ENCODE measurements at regions of chr6 and their contacts with region 1.

Region 1: DNA sequence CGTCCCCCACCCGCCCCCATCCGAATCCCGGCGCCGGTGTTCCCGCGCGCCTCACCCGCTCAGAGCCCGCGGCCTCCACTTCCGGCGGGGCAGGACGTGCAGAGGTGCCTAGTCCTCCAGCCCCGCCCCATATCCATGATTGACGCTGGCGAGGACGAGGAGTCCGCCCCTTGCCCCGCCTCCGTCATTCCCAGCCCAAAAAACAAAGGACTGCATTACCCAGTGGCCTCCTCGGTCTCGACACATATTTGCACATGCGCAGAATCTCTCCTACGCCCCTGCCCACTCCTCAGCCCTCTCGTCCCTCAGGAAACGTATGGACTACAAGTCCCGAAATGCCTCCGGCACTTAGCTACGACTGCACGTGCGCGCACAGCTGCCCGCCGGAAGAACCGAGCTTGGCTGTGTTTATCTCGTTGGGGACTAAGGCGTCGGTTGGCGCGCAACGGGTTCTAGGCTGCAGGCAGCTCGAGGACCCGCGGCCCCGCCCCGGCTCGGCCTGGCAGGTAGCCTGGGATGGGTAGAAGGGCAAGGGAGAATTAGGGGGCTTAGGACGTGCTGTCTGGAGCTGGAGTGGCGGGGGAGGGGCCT is at the starts of genes KLHDC3 and MEA1:
- DNase-seq: peak; percentile 99
- H3K4me3 Mint-ChIP-seq: peak within 1 kb of the TSS; percentile 93
- H3K27ac Mint-ChIP-seq: peak within 1 kb of the TSS; percentile 78
- H3K4me1 Mint-ChIP-seq: peaks cover 41% of the 10 kb centered on the region
- H3K27me3 Mint-ChIP-seq: peaks cover 2% of the 10 kb centered on the region
- total RNA-seq, gene KLHDC3: 76.6 and 77.0 TPM in 2 replicates
- total RNA-seq, gene MEA1: 89.3 and 92.7 TPM in 2 replicates

Region 2: DNA sequence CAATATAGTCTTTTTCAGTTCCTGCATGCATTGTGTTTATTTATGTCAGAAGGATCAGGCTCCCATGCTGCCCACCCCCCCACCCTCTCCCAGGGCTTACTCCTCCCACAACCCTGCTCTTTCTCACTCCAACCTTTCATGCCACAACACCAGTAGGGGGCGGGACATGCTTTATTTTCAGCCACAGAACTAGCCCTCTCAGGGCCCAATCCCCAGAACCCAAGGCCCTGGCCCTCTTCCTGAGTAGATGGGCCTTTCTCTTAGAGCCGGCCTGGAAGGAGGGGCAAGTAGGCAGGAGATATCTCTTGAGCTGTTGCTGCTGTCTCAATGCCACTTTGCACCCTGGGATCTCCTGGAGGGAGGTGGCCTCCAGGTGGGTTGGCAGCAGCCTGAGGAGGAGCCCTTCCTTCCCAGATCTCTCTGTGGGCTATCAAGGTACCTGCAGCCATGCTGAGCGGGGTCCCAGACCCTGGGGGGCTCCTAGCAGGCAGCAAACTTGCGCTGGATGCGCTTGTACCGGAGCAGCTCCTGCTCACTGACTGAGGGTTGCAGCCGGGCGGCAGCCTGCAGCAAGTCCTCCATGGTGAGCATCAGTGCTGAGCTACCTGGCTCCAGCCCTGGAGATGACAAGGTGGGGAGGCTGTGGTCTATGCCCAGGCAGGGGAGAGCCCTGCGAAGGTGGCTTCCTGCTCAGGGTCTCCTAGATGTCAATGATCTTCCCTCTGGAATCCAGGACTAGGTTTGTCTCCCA is 49.9 kb before region 1 on chr6:
- intact Hi-C with region 1: no loop called
- DNase-seq: no peak
- H3K4me3 Mint-ChIP-seq: no peak overlapping the region
- H3K27ac Mint-ChIP-seq: no peak overlapping the region
- H3K4me1 Mint-ChIP-seq: peaks cover 18% of the 10 kb centered on the region
- H3K27me3 Mint-ChIP-seq: peaks cover 18% of the 10 kb centered on the region

Region 3: GRCh38 chr6:42978839-42979522 is 35.0 kb before region 1 on chr6 and contains the start of gene PEX6:
- intact Hi-C with region 1: loop called (anchors 1 kb)
- DNase-seq: peak; percentile 94
- H3K4me3 Mint-ChIP-seq: peak within 1 kb of the TSS; percentile 91
- H3K27ac Mint-ChIP-seq: peak within 1 kb of the TSS; percentile 96
- H3K4me1 Mint-ChIP-seq: peaks cover 38% of the 10 kb centered on the region
- H3K27me3 Mint-ChIP-seq: no peaks in the 10 kb centered on the region
- total RNA-seq, gene PEX6: 20.9 TPM in 2 replicates

Region 4: DNA sequence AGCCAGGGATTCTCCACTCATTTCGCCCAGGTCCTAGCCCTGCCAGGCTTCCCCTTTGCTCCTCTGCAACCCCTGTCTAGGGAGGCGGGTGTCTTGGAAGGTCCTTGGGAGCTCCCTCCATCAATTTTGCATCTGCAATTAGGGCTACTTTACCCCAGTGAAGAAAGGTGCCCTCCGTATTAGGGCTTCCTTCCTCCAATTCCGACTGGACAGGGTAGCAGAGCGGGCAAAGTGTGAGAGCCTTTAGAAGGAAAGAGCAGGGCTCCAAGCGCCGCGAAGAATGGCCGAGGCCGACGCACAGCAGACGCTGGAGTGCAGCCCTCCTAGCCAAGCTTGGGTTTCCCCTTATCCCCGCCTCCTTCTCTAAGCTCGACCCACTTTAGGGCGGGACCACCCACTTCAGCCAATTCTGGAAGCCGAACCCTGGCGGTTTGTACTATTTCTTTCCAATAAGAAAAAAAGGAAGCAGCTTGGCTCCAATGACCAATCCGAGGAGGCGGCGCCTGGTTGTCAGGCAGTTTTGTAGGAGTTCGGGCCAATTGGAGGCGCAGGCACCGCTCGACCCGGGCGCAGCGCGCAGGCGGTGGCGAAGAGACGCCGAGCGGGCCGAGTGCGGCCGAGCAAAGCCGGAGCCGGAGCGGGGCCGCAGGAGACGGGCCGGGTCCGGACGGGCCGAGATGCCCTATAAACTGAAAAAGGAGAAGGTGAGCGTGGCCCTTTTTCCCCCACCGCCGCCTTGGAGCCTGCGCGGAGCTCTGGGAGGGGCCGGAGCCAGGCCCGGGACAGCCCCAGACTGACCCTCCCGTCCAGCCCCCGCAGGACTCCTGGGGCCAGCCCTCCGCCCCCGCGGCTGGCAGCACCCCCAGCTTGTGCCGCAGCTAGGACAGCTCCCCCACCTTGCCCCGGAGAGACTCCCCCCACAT is 29.7 kb before region 1 on chr6 and contains the start of gene PPP2R5D:
- intact Hi-C with region 1: loop called (anchors 1 kb)
- DNase-seq: peak; percentile 97
- H3K4me3 Mint-ChIP-seq: peak within 1 kb of the TSS; percentile 92
- H3K27ac Mint-ChIP-seq: peak within 1 kb of the TSS; percentile 94
- H3K4me1 Mint-ChIP-seq: peaks cover 57% of the 10 kb centered on the region
- H3K27me3 Mint-ChIP-seq: no peaks in the 10 kb centered on the region
- total RNA-seq, gene PPP2R5D: 52.1 and 53.4 TPM in 2 replicates

Region 5: DNA sequence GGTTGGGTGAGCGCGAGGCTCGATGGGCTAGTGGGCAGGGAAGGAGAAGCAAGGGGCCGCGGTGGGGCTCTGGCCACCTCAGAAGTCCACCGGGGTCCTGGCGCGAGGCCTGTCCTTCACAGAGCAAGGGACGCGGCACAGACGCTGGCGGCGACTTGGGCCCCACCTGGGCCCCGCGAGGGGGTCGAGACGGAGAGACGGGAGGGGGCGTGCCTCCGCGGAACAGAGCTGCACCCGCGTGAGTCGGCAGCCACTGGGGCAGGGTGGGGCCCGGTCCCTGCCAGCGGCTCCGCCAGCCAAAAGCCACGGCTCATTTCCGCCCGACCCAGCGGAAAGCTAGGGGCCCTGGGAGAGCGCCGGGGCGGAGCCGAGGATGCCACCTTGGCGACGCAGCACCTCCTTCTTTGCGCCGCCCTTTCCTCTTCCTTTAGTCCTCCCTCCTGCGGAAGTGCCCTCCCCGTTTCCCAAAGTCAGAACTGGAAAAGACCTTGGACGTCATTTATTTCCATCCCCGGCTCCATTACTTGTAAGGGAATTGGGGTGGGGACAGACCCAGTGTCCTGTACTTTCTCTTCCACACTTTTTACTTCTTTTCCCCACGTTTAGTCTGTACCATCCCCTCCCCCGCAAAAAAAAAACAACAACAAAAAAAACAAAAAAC is 39.7 kb after region 1 on chr6 and contains the start of gene CUL7:
- intact Hi-C with region 1: loop called (anchors 1 kb)
- DNase-seq: peak; percentile 89
- H3K4me3 Mint-ChIP-seq: peak within 1 kb of the TSS; percentile 99
- H3K27ac Mint-ChIP-seq: peak within 1 kb of the TSS; percentile 98
- H3K4me1 Mint-ChIP-seq: peaks cover 53% of the 10 kb centered on the region
- H3K27me3 Mint-ChIP-seq: no peaks in the 10 kb centered on the region
- total RNA-seq, gene CUL7: 20.1 and 23.2 TPM in 2 replicates

Region 6: DNA sequence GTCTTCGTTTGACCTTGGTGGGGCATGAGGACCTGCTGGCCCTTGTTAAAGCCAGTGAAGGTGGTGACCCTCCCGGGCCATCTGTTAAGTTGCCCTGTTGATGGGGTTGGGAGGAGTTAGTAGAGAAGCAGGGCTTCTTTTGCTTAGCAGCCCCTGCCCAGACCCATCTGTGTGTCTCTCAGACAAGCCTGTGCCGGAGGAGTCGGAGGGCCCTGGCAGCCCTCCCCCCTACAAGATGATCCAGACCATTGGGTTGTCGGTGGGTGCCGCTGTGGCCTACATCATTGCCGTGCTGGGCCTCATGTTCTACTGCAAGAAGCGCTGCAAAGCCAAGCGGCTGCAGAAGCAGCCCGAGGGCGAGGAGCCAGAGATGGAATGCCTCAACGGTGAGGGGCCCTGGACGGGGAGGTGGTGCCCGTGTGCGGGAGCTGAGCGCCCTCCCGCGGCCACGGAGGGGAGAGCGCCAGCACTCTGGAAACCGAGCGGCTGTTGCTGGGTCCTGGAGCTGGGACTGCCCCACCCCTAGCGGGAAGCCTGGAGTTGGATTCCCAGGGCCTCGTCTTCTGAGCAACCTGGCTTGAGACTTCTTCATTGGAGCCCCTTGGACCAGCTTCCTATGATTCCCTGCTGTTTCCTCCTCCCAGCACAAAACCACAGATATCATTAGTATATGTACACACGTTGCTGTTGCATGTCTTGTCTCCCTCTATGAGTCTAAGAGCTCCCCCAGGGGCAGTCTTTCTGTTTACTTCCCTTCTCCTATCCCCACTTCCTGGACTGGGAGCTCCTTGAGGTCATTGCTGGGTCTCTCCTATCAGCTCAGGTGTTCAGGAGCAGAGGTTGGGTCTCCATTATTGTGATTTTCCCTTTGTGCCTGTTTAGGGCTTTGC is 129.5 kb after region 1 on chr6:
- intact Hi-C with region 1: loop called (anchors 1 kb)
- DNase-seq: peak; percentile 63
- H3K4me3 Mint-ChIP-seq: no peak overlapping the region
- H3K27ac Mint-ChIP-seq: peak overlapping the region; percentile 14
- H3K4me1 Mint-ChIP-seq: no peaks in the 10 kb centered on the region
- H3K27me3 Mint-ChIP-seq: no peaks in the 10 kb centered on the region

Region 7: DNA sequence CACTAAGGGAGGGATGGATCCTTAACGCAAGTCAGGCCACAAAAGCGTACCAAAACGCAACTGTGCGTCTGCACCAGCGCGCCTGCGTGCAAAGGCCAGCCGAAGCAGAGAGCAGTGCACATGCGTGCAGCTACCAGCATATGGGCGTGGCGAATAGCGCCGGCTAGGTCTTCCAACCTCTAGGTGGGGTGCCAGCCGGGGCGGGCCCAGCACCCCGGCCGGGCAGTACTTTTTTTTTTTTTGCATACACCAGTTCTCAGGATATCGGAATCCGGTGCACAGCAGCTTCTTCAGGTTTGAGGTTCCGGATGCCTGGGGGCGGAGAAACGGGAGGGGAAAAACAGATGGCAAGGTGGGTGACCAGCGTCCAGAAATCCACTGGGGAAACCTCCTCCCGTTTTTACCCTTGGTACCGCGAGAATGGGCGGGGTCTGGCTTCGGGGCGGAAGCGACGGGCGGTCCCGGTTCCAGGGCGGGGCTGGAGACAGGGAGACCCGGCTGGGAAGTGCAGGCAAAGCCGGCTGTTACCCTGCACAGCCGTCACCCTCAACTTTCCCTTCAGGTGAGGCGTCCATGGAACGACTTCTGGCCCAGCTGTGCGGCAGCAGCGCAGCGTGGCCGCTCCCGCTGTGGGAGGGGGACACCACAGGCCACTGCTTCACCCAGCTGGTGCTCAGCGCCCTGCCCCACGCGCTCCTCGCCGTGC is 413.6 kb after region 1 on chr6 and contains the start of gene ABCC10:
- intact Hi-C with region 1: loop called (anchors 1 kb)
- DNase-seq: peak; percentile 93
- H3K4me3 Mint-ChIP-seq: peak within 1 kb of the TSS; percentile 96
- H3K27ac Mint-ChIP-seq: peak within 1 kb of the TSS; percentile 96
- H3K4me1 Mint-ChIP-seq: peaks cover 17% of the 10 kb centered on the region
- H3K27me3 Mint-ChIP-seq: no peaks in the 10 kb centered on the region
- total RNA-seq, gene ABCC10: 40.5 and 43.6 TPM in 2 replicates

Region 8: DNA sequence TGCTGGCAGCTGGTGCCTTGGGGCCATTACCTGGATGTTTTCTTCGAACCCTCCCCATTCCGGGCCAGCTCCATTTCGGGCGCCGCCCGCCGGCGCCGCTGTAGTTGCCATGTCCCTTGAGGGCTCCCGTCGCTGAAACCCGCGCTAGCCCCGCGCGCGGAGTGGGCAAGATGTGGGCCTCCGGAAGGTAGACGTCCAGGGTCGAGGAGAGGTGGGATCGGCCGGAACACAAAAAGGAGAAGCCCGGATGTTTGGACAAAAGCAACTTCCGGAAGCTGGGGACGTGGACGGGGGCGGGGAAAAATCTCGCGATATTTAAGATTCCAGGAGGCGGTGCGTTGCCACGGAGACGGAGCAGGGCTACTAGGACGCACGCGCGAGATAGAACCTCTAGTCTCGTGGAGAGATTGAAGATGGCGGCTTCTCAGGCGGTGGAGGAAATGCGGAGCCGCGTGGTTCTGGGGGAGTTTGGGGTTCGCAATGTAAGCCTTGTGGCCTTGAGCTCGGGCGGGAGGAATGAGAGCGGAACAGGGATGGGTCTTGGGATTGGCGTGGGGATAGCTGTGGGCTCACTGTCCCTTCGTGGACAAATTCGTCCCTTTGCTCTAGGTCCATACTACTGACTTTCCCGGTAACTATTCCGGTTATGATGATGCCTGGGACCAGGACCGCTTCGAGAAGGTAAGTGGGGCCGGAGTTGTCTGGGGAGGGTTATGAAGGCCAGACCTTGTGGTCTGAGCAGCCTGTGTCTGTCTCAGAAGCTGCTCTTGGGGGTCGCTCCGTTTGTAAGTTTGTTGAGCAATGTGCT is 503.0 kb after region 1 on chr6 and contains the starts of genes POLR1C and YIPF3:
- intact Hi-C with region 1: loop called (anchors 1 kb)
- DNase-seq: peak; percentile 95
- H3K4me3 Mint-ChIP-seq: no peak within 1 kb of the TSS
- H3K27ac Mint-ChIP-seq: no peak within 1 kb of the TSS
- H3K4me1 Mint-ChIP-seq: peaks cover 20% of the 10 kb centered on the region
- H3K27me3 Mint-ChIP-seq: no peaks in the 10 kb centered on the region
- total RNA-seq, gene POLR1C: 85.8 and 98.0 TPM in 2 replicates
- total RNA-seq, gene YIPF3: 60.2 and 62.5 TPM in 2 replicates

Measured in activated T-helper 1 cell treated with anti-CD3 and anti-CD28 coated beads, Interleukin-12 subunit alpha, Interleukin-12 subunit beta, Interleukin-2, Interleukin-4 antibody, amounts not matched to agents 30 ng/mL and 10 ng/mL and 1 ng/mL, durations not matched to agents 14 hours and 24 hours and 36 hours (primary cell).